ENCODE measurements at regions of chr18 and their contacts with region 1.

Region 1: DNA sequence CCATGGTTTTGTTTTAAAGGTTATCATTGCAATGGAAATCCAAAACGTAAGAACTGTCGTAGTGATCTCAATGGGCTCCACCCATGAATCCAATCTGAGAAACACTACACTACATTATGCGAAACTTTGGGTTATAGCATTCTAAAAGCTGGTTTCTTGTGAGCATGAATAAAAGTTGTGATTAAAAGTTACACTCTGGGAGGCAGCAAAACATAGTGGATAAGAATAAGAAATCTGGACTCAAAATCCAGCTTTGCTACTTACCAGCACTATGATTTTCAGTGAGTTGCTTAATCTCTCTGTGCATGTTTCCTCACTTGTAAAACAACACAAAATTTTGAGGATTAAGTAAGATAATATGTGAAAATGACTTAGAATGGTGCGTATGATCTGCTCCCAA is 25.7 kb upstream of the THOC1 start:
- DNase-seq: no peak
- H3K4me3 ChIP-seq: no peak overlapping the region
- H3K27ac ChIP-seq: no peak overlapping the region
- H3K4me1 ChIP-seq: no peaks in the 10 kb centered on the region
- H3K27me3 ChIP-seq: no peaks in the 10 kb centered on the region
- CTCF ChIP-seq: peak in 1 of 3 donors; percentile 15
- EP300 ChIP-seq: no peak
- POLR2A ChIP-seq: no peak

Region 2: DNA sequence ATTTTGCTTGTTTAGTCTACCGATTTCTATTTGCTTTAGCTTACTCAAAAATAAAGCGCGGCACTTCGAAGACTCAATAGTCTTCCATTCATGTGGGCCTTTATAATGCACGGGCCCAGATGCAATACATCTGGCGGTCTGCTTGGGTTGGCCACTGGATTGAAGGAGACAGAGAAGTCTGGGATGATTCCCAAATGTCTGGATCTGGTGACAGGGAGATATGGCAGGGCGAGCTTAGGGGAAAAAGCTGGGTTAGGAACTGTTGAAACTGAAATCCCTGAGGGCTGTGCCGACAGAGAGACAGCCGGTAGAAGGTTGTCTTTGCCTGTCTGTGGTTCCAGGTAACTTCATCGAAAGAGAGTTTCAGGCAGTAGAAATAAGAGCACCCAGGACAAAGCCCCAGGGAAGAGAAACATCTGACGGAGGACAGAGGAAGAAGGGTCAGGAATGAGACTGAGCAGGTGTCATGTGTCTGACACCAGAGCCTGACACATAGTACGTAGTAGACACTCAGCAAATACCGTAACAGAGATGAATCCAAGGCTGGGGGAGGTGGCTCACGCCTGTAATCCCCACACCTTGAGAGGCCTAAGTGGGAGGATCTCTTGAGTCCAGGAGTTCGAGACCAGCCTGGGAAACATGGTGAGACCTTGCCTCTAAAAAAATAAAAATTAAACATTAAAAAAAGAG is 316.8 kb after region 1 on chr18:
- intact Hi-C with region 1: loop called in 3 of 4 experiments (anchors 5 to 10 kb)
- DNase-seq: no peak
- H3K4me3 ChIP-seq: no peak overlapping the region
- H3K27ac ChIP-seq: no peak overlapping the region
- H3K4me1 ChIP-seq: no peaks in the 10 kb centered on the region
- H3K27me3 ChIP-seq: no peaks in the 10 kb centered on the region
- CTCF ChIP-seq: no peak
- EP300 ChIP-seq: no peak
- POLR2A ChIP-seq: no peak

Region 3: DNA sequence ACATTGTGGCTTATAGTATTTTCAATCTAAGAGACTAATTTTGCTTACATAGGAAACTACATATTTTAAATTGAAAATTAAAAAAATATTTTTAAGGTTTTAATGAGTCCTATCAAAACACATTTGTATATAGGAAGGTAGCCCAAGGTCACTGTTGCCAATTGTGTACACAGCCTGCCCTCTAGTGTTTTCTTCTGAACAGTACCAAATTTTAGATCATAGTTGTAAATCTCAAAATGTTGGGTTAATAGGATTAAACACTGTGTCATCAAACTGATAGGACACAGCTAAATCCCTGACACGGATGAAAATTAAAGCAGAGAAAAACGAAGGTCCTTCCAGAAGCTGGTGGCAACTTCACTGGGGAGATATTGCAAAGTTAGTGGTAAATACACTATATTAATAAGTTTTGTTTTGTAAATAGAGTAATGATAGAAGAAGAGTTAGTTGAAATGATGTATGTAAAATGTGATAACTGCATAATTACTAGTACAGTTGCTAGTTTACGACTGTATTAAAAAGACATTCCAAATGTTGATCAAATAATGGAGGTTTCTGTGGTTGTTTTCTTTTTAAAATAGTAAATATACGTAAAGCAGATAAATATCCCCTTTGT is 323.0 kb after region 1 on chr18:
- intact Hi-C with region 1: loop called in 3 of 4 experiments (anchors 5 to 10 kb)
- DNase-seq: no peak
- H3K4me3 ChIP-seq: no peak overlapping the region
- H3K27ac ChIP-seq: no peak overlapping the region
- H3K4me1 ChIP-seq: no peaks in the 10 kb centered on the region
- H3K27me3 ChIP-seq: no peaks in the 10 kb centered on the region
- CTCF ChIP-seq: peak; percentile 21 to 71 (median 49)
- EP300 ChIP-seq: no peak
- POLR2A ChIP-seq: no peak